ENCODE measurements at regions of chr1 and their contacts with region 1.

Region 1: DNA sequence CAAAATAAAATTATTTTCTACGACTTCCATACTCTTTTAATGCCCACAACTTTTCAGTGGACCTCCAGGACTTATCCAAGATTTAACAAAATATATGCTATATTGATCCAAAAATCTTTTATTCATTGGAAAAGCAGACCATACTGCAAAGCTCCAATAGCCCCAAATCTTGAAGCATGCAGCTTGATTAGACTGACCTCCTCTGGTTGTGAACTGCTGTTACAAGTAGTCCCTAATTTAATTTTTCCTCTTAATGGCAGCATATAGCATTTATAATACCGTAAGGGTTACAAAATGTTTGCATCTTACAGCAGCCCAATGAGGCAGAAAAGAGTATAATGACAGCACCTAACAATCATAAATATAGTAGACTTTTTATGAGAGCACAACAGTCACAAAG is 49.8 kb downstream of the TPR start:
- DNase-seq: no peak
- ATAC-seq: no peak

Region 2: GRCh38 chr1:186393476-186393875 is 68.2 kb after region 1 on chr1:
- intact Hi-C with region 1: no loop called
- DNase-seq: no peak
- ATAC-seq: no peak

Region 3: DNA sequence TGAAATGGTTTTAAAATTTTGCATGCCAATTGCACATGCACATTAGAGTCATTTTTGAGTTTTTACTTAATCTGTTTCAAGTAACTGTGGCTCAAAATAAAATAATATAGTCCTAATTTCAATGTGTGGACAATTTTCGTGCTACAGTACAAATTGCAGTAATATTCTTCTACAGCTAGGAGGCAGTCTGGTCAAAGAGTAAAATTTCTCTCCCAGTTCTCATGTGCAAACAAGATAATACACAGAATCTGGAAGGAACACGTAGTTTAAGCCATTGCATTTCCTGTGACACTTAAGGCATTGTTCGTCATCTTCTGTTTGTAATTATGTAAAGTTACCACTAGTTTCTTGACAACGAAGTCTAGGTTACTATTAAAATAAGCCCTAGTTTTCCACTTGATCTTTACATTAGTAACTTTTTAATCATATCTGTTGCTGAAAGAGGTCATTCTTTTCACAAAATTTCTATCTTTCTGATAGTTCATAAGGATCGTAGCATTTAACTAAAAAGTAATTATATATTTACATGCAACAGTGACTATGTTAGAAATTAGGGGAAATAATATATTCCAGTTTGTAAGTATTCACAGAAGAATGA is 79.3 kb after region 1 on chr1:
- intact Hi-C with region 1: loop called (anchors 10 kb)
- DNase-seq: no peak
- ATAC-seq: peak; percentile 38

Region 4: GRCh38 chr1:186775881-186776560 is 450.8 kb after region 1 on chr1:
- intact Hi-C with region 1: no loop called
- DNase-seq: no peak
- ATAC-seq: no peak

Measured in Right ventricle myocardium superior (tissue), 1 donor.